Psoas muscle (tissue), 8 donors: ENCODE measurements at regions of chr4 and their contacts with region 1.

Region 1: GRCh38 chr4:74038161-74039064 is at the start of gene CXCL3:
- DNase-seq: peak; percentile 74 to 75
- ATAC-seq: peak; percentile 57 to 83 (median 67)
- H3K4me3 ChIP-seq: peak within 1 kb of the TSS; percentile 71
- H3K27ac ChIP-seq: peak within 1 kb of the TSS; percentile 57
- H3K4me1 ChIP-seq: peaks cover 5% of the 10 kb centered on the region
- H3K27me3 ChIP-seq: peaks cover 0 to 24% (median 3%) of the 10 kb centered on the region in 3 donors
- CTCF ChIP-seq: peak; percentile 23
- total RNA-seq, gene CXCL3: 0.40 to 2.4 (median 0.77) TPM

Region 2: GRCh38 chr4:73978886-73979285 is 59.5 kb before region 1 on chr4:
- intact Hi-C with region 1: no loop called
- DNase-seq: no peak
- ATAC-seq: no peak
- H3K4me3 ChIP-seq: no peak overlapping the region
- H3K27ac ChIP-seq: no peak overlapping the region
- H3K4me1 ChIP-seq: no peaks in the 10 kb centered on the region
- H3K27me3 ChIP-seq: no peaks in the 10 kb centered on the region
- CTCF ChIP-seq: no peak

Region 3: GRCh38 chr4:74092957-74093356 is 54.5 kb after region 1 on chr4:
- intact Hi-C with region 1: loop called in 1 of 2 experiments (anchors 5 kb)
- DNase-seq: no peak
- ATAC-seq: no peak
- H3K4me3 ChIP-seq: no peak overlapping the region
- H3K27ac ChIP-seq: no peak overlapping the region
- H3K4me1 ChIP-seq: no peaks in the 10 kb centered on the region
- H3K27me3 ChIP-seq: peaks cover 0 to 5% (median 0%) of the 10 kb centered on the region in 3 donors
- CTCF ChIP-seq: no peak

Region 4: DNA sequence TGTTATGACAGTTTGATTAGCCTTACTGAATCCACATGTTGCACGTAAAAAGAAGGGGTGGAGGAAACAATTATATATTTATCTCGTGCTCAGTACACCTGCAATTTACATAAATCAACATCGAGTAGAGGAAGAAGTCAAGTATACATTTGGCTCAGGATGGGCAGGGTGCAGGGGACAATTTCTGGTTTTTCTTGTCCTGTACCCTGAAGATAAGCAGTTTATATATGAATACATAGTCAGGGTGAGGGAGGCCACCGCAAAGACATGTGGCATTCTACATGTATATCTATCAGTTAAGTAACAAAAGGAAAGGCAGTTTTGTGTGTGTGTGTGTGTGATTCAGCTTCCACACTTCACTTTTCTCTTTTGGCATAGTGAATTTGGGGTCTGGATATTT is 315.4 kb after region 1 on chr4:
- intact Hi-C with region 1: no loop called
- DNase-seq: no peak
- ATAC-seq: no peak
- H3K4me3 ChIP-seq: no peak overlapping the region
- H3K27ac ChIP-seq: no peak overlapping the region
- H3K4me1 ChIP-seq: no peaks in the 10 kb centered on the region
- H3K27me3 ChIP-seq: no peaks in the 10 kb centered on the region
- CTCF ChIP-seq: no peak

Region 5: DNA sequence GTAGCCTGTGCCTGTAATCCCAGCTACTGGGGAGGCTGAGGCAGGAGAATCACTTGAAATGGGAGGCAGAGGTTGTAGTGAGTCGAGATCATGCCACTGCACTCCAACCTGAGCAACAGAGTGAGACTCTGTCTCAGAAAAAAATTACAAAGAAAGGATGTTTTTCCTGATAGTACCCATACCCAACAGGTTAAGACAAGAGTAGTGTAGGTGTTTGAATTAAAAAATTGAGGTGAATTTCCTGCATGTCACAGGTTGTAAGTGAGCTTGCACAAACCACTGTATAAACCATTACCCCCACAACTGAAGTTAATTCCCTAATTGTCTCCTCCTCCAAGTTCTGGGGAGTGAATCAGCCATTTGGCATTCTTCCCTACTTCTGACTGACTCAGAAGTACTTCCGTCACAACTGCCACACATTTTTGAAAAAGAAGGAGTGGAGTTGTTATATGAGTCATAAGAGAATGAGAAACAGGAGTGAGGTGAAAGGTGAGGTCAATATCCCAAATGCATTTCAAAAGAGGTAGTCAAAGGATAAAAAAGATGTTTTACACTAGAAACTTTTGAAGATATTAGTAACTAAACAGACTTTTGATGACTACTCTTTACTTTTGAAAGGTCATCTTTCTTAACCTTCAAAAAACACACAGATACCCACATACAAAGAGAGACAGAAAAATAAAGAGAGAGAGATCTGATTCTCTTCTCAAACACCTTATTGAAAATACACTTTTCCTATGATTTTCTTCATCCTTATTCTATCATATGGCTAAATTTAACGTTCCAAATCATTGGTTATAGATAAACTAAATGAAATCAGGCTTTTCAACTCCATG is 621.4 kb after region 1 on chr4:
- intact Hi-C with region 1: loop called in 1 of 2 experiments (anchors 10 kb)
- DNase-seq: no peak
- ATAC-seq: peak in 3 of 4 donors; percentile 24 to 33 (median 30)
- H3K4me3 ChIP-seq: no peak overlapping the region
- H3K27ac ChIP-seq: no peak overlapping the region
- H3K4me1 ChIP-seq: no peaks in the 10 kb centered on the region
- H3K27me3 ChIP-seq: no peaks in the 10 kb centered on the region
- CTCF ChIP-seq: no peak